GM13976 (cell line): ENCODE measurements at regions of chr4 and their contacts with region 1.

Region 1: GRCh38 chr4:81844717-81845116 is 373.0 kb upstream of the RASGEF1B start:
- DNase-seq: peak; percentile 50
- CTCF ChIP-seq: peak; percentile 67

Region 2: GRCh38 chr4:81405894-81406401 is 438.8 kb before region 1 on chr4:
- in situ Hi-C with region 1: loop called (anchors 10 kb)
- DNase-seq: peak; percentile 61
- CTCF ChIP-seq: peak; percentile 53

Region 3: GRCh38 chr4:81471588-81472288 is 373.0 kb before region 1 on chr4 and contains the start of gene RASGEF1B:
- in situ Hi-C with region 1: loop called (anchors 10 kb)
- DNase-seq: peak; percentile 92
- CTCF ChIP-seq: no peak